ENCODE measurements at regions of chr4 and their contacts with region 1.

Region 1: GRCh38 chr4:168923526-168924194 is 86.4 kb downstream of the CBR4 start:
- DNase-seq: peak; percentile 33
- H3K4me3 ChIP-seq: no peak overlapping the region
- H3K27me3 ChIP-seq: no peaks in the 10 kb centered on the region
- CTCF ChIP-seq: peak; percentile 75

Region 2: GRCh38 chr4:168514249-168514852 is 409.3 kb before region 1 on chr4:
- CTCF ChIA-PET with region 1: interaction called, 20 read pairs
- POLR2A ChIA-PET with region 1: no interaction called
- DNase-seq: no peak
- H3K4me3 ChIP-seq: no peak overlapping the region
- H3K27me3 ChIP-seq: no peaks in the 10 kb centered on the region
- CTCF ChIP-seq: peak; percentile 26; the same call in 1 of the 2 replicates

Region 3: DNA sequence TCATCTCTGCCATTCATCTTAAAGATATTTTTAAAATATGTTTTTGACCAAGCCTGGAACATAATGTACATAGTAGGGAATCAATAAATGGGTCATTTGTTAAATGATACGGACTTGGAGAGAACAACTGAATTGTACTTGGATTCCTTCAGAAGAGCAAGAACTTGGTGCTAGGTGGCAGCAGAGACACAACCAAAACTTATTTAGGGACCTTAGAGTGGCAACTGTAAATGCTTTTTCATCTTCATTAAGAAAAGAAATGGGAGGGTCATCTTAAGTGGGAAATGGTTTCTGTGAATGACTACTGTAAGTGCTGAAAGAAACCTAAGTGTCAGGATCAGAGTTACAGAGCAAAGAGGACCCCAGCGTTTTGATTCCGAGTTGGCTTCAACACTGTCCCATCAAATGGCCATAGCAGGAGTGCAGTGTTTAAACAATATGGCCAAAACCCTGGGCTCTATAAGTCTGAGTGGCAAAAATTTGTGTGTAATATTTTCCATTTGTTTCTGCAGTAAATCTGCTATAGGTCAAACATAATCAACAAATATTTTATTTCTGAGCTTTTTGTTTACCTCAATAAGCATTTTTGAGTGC is 213.2 kb before region 1 on chr4:
- CTCF ChIA-PET with region 1: interaction called, 87 read pairs
- POLR2A ChIA-PET with region 1: no interaction called
- DNase-seq: no peak
- H3K4me3 ChIP-seq: no peak overlapping the region
- H3K27me3 ChIP-seq: no peaks in the 10 kb centered on the region
- CTCF ChIP-seq: peak; percentile 69

Region 4: GRCh38 chr4:168784786-168785461 is 138.7 kb before region 1 on chr4:
- CTCF ChIA-PET with region 1: interaction called, 3 read pairs
- POLR2A ChIA-PET with region 1: interaction called, 14 read pairs
- DNase-seq: no peak
- H3K4me3 ChIP-seq: no peak overlapping the region
- H3K27me3 ChIP-seq: no peaks in the 10 kb centered on the region
- CTCF ChIP-seq: no peak

Region 5: GRCh38 chr4:168831919-168832762 is 91.5 kb before region 1 on chr4:
- CTCF ChIA-PET with region 1: interaction called, 4 read pairs
- POLR2A ChIA-PET with region 1: interaction called, 11 read pairs
- DNase-seq: no peak
- H3K4me3 ChIP-seq: peak overlapping the region; percentile 95
- H3K27me3 ChIP-seq: no peaks in the 10 kb centered on the region
- CTCF ChIP-seq: no peak

Region 6: DNA sequence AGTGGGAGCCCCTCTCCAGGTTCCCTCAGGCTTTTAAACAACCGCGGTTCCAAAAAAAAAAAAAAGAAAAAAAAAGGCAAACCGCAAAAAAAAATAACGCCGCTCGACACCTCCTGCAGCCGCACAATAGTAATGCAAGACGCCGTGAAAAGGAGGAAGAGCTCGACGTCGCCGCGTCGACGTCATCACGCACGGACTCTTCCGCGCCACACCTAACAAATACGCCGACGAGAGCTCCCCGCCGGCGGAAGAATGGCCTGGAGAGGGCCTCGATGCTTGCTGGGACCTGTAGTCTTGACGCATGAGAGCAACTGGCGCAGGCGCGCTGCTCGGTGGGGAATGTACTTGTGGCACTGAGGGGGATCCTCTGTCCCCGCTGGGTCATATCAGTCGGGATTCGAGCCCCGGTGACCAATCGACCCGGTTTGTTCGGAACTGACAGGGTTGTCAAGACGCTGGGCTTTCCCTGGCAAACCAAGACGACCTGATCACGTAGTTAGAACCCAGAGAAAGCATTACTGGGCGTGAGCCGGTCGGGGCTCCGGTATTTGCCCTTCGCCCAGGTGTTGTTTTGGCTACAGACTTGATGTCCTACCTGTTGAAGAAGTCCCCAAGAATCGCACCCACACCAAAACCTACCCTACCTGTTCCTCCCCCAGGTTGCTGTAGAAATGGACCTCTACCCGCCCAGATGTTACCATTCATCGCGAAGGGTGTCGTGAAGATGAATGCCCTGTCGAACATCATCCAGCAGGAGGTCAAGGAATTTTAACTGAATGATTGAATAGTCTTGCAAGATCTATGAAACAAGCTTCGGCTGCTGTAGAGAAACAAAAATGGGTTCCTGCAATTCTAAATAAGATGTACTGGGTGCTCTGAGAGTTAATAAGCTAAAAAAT is 86.7 kb after region 1 on chr4 and contains the start of gene CBR4:
- CTCF ChIA-PET with region 1: interaction called, 27 read pairs
- POLR2A ChIA-PET with region 1: interaction called, 9 read pairs
- DNase-seq: peak; percentile 93
- H3K4me3 ChIP-seq: peak within 1 kb of the TSS; percentile 82
- H3K27me3 ChIP-seq: no peaks in the 10 kb centered on the region
- CTCF ChIP-seq: peak; percentile 44
- polyA plus RNA-seq, gene CBR4: 1.7 and 3.1 TPM in 2 replicates

Region 7: GRCh38 chr4:169263791-169264392 is 340.2 kb after region 1 on chr4:
- CTCF ChIA-PET with region 1: no interaction called
- POLR2A ChIA-PET with region 1: no interaction called
- DNase-seq: no peak
- H3K4me3 ChIP-seq: no peak overlapping the region
- H3K27me3 ChIP-seq: no peaks in the 10 kb centered on the region
- CTCF ChIP-seq: no peak

Region 8: GRCh38 chr4:169492438-169493163 is 568.9 kb after region 1 on chr4:
- CTCF ChIA-PET with region 1: interaction called, 24 read pairs
- POLR2A ChIA-PET with region 1: no interaction called
- DNase-seq: no peak
- H3K4me3 ChIP-seq: no peak overlapping the region
- H3K27me3 ChIP-seq: no peaks in the 10 kb centered on the region
- CTCF ChIP-seq: peak; percentile 80